ENCODE measurements at regions of chr5 and their contacts with region 1.

Region 1: GRCh38 chr5:160199410-160199911 is 29.8 kb upstream of the FABP6 start:
- DNase-seq: peak; percentile 76 to 92 (median 91)
- ATAC-seq: peak; percentile 96
- H3K4me3 ChIP-seq: peak overlapping the region; percentile 25
- H3K27ac ChIP-seq: no peak overlapping the region
- H3K4me1 ChIP-seq: peaks cover 8% of the 10 kb centered on the region
- H3K27me3 ChIP-seq: no peaks in the 10 kb centered on the region

Region 2: DNA sequence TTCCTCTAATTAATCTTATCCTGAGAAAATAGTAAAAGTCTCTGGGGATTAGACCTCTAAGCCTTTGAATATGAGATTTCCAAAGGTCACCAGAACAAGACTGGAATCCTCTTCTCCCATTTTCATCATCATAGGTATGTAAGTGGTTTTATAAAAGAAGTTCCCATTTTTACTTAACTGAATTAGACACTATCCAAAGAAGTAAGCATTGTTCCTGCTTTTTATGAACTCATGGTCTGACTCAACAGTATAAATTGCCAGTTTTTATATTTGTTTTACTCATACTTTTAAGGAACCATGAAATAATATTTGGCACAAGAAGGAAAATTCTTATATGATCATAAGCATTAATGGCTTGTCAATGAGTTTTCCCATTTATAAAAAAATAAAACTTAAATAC is 450.3 kb before region 1 on chr5:
- intact Hi-C with region 1: no loop called
- DNase-seq: no peak
- ATAC-seq: no peak
- H3K4me3 ChIP-seq: no peak overlapping the region
- H3K27ac ChIP-seq: no peak overlapping the region
- H3K4me1 ChIP-seq: no peaks in the 10 kb centered on the region
- H3K27me3 ChIP-seq: no peaks in the 10 kb centered on the region

Region 3: DNA sequence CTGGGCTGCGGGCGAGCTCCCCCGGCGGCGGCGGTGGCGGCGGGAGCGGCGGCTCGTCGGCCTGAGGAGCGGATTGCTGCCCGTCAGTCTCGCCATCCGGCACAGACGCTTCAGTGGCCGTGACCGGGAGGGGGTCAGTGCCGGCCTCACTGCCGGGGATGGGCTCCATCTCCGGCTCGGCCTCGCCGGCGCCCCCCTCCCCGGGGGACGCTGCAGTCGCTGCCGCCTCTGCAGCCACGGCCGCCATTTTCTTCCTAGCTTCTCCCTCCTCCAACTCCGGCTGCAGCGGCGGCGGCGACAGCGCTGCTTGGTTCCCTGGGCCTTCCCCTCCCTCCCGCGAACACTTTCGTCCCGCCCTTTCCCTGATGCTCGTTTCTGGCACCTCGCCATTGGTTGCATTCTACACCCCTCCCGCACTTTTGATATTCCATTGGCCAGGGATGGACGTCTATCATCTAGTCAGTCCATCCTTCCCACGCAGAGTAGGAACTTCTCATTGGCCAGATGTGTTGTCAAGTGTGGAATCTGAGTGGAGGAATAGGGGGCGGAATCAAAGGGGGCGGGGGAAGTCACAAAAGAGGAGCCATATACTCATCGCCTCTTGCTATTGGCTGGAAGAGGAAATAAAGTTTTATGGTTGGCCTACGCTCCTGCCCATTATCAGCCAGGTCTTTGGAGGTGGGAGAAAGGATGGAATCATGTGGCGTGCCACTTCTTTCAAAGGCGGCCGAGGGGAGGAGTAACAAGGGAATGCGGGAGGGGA is 80.1 kb before region 1 on chr5 and contains the start of gene PWWP2A:
- intact Hi-C with region 1: loop called in 1 of 4 experiments (anchors 5 kb)
- DNase-seq: peak; percentile 99
- ATAC-seq: peak; percentile 98
- H3K4me3 ChIP-seq: peak within 1 kb of the TSS; percentile 68
- H3K27ac ChIP-seq: peak within 1 kb of the TSS; percentile 88
- H3K4me1 ChIP-seq: no peaks in the 10 kb centered on the region
- H3K27me3 ChIP-seq: no peaks in the 10 kb centered on the region
- total RNA-seq, gene PWWP2A: 11.6 to 18.2 (median 14.4) TPM

Region 4: GRCh38 chr5:160342403-160342941 is 143.0 kb after region 1 on chr5:
- intact Hi-C with region 1: loop called (anchors 2 to 5 kb)
- DNase-seq: no peak
- ATAC-seq: peak; percentile 19 to 28
- H3K4me3 ChIP-seq: no peak overlapping the region
- H3K27ac ChIP-seq: no peak overlapping the region
- H3K4me1 ChIP-seq: peaks cover 4% of the 10 kb centered on the region
- H3K27me3 ChIP-seq: no peaks in the 10 kb centered on the region